ENCODE measurements at regions of chr9 and their contacts with region 1.

Region 1: GRCh38 chr9:129954868-129955550 is 88.0 kb downstream of the FNBP1 start:
- DNase-seq: no peak
- ATAC-seq: no peak
- H3K4me3 Mint-ChIP-seq: no peak overlapping the region
- H3K27ac Mint-ChIP-seq: peak overlapping the region; percentile 59
- H3K4me1 Mint-ChIP-seq: peaks cover 23% of the 10 kb centered on the region
- H3K27me3 Mint-ChIP-seq: no peaks in the 10 kb centered on the region

Region 2: DNA sequence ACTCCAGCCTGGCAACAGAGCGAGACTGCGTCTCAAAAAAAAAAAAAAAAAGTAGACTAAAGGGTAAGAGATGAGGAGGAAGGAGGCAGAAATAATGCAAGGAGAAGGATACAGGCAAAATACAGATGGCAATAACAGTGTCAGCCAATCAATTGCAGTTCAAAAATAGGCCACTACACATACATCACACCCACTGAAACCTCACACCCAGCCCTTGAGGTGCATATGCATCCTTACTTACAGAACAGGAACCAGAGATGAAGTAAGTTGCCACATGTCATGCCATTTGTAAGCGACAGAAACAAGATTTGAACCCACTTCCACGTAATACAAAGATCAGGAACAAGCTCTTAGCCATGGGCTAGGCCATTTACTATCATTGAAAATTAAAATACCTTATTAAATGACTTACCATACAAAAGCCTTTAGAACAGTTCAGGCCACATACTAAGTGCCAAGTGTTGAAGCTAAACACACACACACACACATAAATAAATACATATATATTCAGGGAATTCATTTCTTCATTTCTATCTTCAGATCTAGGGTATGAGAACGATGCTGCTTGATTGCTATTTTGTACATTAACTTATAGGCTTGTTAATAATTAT is 10.4 kb before region 1 on chr9:
- POLR2A ChIA-PET with region 1: interaction called, 12 read pairs
- DNase-seq: no peak
- ATAC-seq: peak; percentile 97
- H3K4me3 Mint-ChIP-seq: peak overlapping the region; percentile 68
- H3K27ac Mint-ChIP-seq: peak overlapping the region; percentile 90
- H3K4me1 Mint-ChIP-seq: peaks cover 38% of the 10 kb centered on the region
- H3K27me3 Mint-ChIP-seq: no peaks in the 10 kb centered on the region

Measured in activated naive CD8-positive, alpha-beta T cell treated with anti-CD3 and anti-CD28 coated beads, Interleukin-2, amount 10 ng/mL, durations not matched to agents 7 days and 5 days (primary cell).